CD8-positive, alpha-beta T cell (primary cell): ENCODE measurements at regions of chr16 and their contacts with region 1.

Region 1: GRCh38 chr16:117379-118365 is 20.8 kb downstream of the NPRL3 start:
- DNase-seq: peak; percentile 33 to 80 (median 73)
- ATAC-seq: peak; percentile 89
- H3K4me3 ChIP-seq: no peak overlapping the region
- H3K4me3 Mint-ChIP-seq: no peak overlapping the region
- H3K27ac ChIP-seq: no peak overlapping the region
- H3K27ac Mint-ChIP-seq: no peak overlapping the region
- H3K4me1 ChIP-seq: peaks cover 3% of the 10 kb centered on the region
- H3K4me1 Mint-ChIP-seq: peaks cover 6% of the 10 kb centered on the region
- H3K27me3 ChIP-seq: no peaks in the 10 kb centered on the region
- H3K27me3 Mint-ChIP-seq: no peaks in the 10 kb centered on the region
- CTCF ChIP-seq: peak; percentile 81

Region 2: DNA sequence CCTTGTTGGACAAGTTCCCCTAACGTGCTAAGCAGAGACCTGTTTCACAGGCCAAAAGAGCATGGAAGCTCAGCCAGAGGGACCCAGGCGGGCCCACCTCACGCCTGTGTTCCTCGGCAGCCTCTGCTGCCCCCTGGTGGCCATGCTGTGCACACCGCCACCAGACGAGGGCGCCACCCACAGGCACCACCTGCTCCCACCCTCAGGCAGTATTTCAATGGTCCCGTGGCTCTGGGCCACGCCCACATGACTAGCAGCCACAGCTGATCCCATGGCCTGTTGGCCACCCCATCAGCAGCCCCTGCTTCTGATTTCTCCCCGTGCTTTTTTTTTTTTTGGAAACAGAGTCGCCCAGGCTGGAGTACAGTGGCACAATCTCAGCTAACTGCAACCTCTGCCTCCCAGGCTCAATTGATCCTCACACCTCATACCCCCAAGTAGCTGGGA is 20.7 kb before region 1 on chr16:
- CTCF ChIA-PET with region 1: interaction called, 14 read pairs
- POLR2A ChIA-PET with region 1: no interaction called
- intact Hi-C with region 1: no loop called
- DNase-seq: peak; percentile 82 to 94 (median 90)
- ATAC-seq: peak; percentile 100
- H3K4me3 ChIP-seq: no peak overlapping the region
- H3K4me3 Mint-ChIP-seq: no peak overlapping the region
- H3K27ac ChIP-seq: no peak overlapping the region
- H3K27ac Mint-ChIP-seq: no peak overlapping the region
- H3K4me1 ChIP-seq: no peaks in the 10 kb centered on the region
- H3K4me1 Mint-ChIP-seq: peaks cover 5% of the 10 kb centered on the region
- H3K27me3 ChIP-seq: no peaks in the 10 kb centered on the region
- H3K27me3 Mint-ChIP-seq: no peaks in the 10 kb centered on the region
- CTCF ChIP-seq: peak; percentile 97

Region 3: GRCh38 chr16:106623-107324 is 10.9 kb before region 1 on chr16:
- CTCF ChIA-PET with region 1: interaction called, 40 read pairs
- POLR2A ChIA-PET with region 1: no interaction called
- intact Hi-C with region 1: no loop called
- DNase-seq: peak in 8 of 9 experiments; percentile 31 to 82 (median 60)
- ATAC-seq: peak; percentile 80
- H3K4me3 ChIP-seq: no peak overlapping the region
- H3K4me3 Mint-ChIP-seq: no peak overlapping the region
- H3K27ac ChIP-seq: no peak overlapping the region
- H3K27ac Mint-ChIP-seq: no peak overlapping the region
- H3K4me1 ChIP-seq: no peaks in the 10 kb centered on the region
- H3K4me1 Mint-ChIP-seq: peaks cover 3% of the 10 kb centered on the region
- H3K27me3 ChIP-seq: no peaks in the 10 kb centered on the region
- H3K27me3 Mint-ChIP-seq: no peaks in the 10 kb centered on the region
- CTCF ChIP-seq: peak; percentile 72

Region 4: GRCh38 chr16:138049-138417 is 20.4 kb after region 1 on chr16:
- CTCF ChIA-PET with region 1: interaction called, 12 read pairs
- POLR2A ChIA-PET with region 1: no interaction called
- intact Hi-C with region 1: no loop called
- DNase-seq: peak in 6 of 9 experiments; percentile 8 to 61 (median 36)
- ATAC-seq: peak; percentile 25
- H3K4me3 ChIP-seq: peak overlapping the region; percentile 58 to 75
- H3K4me3 Mint-ChIP-seq: peak overlapping the region; percentile 85
- H3K27ac ChIP-seq: peak overlapping the region; percentile 33 to 40
- H3K27ac Mint-ChIP-seq: peak overlapping the region; percentile 66
- H3K4me1 ChIP-seq: peaks cover 7% of the 10 kb centered on the region
- H3K4me1 Mint-ChIP-seq: peaks cover 34% of the 10 kb centered on the region
- H3K27me3 ChIP-seq: no peaks in the 10 kb centered on the region
- H3K27me3 Mint-ChIP-seq: no peaks in the 10 kb centered on the region
- CTCF ChIP-seq: no peak

Region 5: GRCh38 chr16:180938-181667 is 63.4 kb after region 1 on chr16:
- CTCF ChIA-PET with region 1: interaction called, 38 read pairs
- POLR2A ChIA-PET with region 1: no interaction called
- intact Hi-C with region 1: loop called (anchors 1 kb)
- DNase-seq: peak; percentile 74 to 93 (median 85)
- ATAC-seq: peak; percentile 89
- H3K4me3 ChIP-seq: peak overlapping the region; percentile 42 to 59
- H3K4me3 Mint-ChIP-seq: peak overlapping the region; percentile 63
- H3K27ac ChIP-seq: no peak overlapping the region
- H3K27ac Mint-ChIP-seq: no peak overlapping the region
- H3K4me1 ChIP-seq: peaks cover 20% of the 10 kb centered on the region
- H3K4me1 Mint-ChIP-seq: peaks cover 8% of the 10 kb centered on the region
- H3K27me3 ChIP-seq: peaks cover 14 to 16% of the 10 kb centered on the region in 2 experiments
- H3K27me3 Mint-ChIP-seq: peaks cover 16% of the 10 kb centered on the region
- CTCF ChIP-seq: peak; percentile 96

Region 6: GRCh38 chr16:309476-309875 is 191.8 kb after region 1 on chr16:
- CTCF ChIA-PET with region 1: no interaction called
- POLR2A ChIA-PET with region 1: no interaction called
- intact Hi-C with region 1: loop called in 1 of 2 experiments (anchors 2 kb)
- DNase-seq: peak in 5 of 9 experiments; percentile 43 to 74 (median 51)
- ATAC-seq: peak; percentile 86
- H3K4me3 ChIP-seq: no peak overlapping the region
- H3K4me3 Mint-ChIP-seq: no peak overlapping the region
- H3K27ac ChIP-seq: no peak overlapping the region
- H3K27ac Mint-ChIP-seq: peak overlapping the region; percentile 70
- H3K4me1 ChIP-seq: peaks cover 9% of the 10 kb centered on the region
- H3K4me1 Mint-ChIP-seq: peaks cover 17% of the 10 kb centered on the region
- H3K27me3 ChIP-seq: no peaks in the 10 kb centered on the region
- H3K27me3 Mint-ChIP-seq: no peaks in the 10 kb centered on the region
- CTCF ChIP-seq: no peak

Region 7: GRCh38 chr16:361872-362701 is 244.4 kb after region 1 on chr16:
- CTCF ChIA-PET with region 1: interaction called, 22 read pairs
- POLR2A ChIA-PET with region 1: no interaction called
- intact Hi-C with region 1: loop called in 1 of 2 experiments (anchors 1 kb)
- DNase-seq: peak; percentile 51 to 86 (median 77)
- ATAC-seq: peak; percentile 96
- H3K4me3 ChIP-seq: peak overlapping the region in 1 of 2 experiments; percentile 37
- H3K4me3 Mint-ChIP-seq: peak overlapping the region; percentile 26
- H3K27ac ChIP-seq: no peak overlapping the region
- H3K27ac Mint-ChIP-seq: peak overlapping the region; percentile 45
- H3K4me1 ChIP-seq: peaks cover 9% of the 10 kb centered on the region
- H3K4me1 Mint-ChIP-seq: peaks cover 8% of the 10 kb centered on the region
- H3K27me3 ChIP-seq: no peaks in the 10 kb centered on the region
- H3K27me3 Mint-ChIP-seq: no peaks in the 10 kb centered on the region
- CTCF ChIP-seq: peak; percentile 80